Heart right ventricle (tissue), 16 donors: ENCODE measurements at regions of chr6 and their contacts with region 1.

Region 1: DNA sequence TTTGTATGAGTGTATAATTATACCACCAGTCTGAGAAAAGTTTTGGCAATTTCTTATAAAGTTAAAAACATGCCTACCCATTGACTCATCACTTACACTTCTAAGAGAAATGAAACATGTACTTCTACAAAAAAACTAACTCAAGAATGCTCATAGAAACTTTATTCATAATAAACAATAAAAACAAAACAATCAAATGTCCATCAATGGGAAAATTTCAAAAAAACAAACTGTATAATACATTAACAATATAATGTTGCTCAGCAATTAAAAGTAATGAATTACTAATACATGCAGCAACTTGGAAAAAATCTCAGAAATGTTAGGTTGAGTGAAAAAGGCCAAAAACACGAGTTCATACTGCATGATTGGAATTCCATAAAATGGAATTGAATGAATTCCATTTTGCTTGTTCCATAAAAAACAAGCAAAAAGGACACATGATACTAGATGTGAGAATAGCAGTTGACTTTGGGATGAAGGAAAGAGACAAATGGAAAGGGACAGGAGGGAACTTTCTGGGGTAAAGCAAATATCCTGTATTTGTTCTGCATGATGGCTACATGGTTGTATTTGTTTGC is 726.6 kb downstream of the RFPL4B start:
- DNase-seq: no peak
- ATAC-seq: no peak
- H3K4me3 ChIP-seq: no peak overlapping the region
- H3K27ac ChIP-seq: no peak overlapping the region
- H3K4me1 ChIP-seq: no peaks in the 10 kb centered on the region
- H3K27me3 ChIP-seq: no peaks in the 10 kb centered on the region
- CTCF ChIP-seq: no peak

Region 2: GRCh38 chr6:112665114-112665513 is 408.6 kb before region 1 on chr6:
- intact Hi-C with region 1: no loop called
- DNase-seq: no peak
- ATAC-seq: no peak
- H3K4me3 ChIP-seq: no peak overlapping the region
- H3K27ac ChIP-seq: no peak overlapping the region
- H3K4me1 ChIP-seq: no peaks in the 10 kb centered on the region
- H3K27me3 ChIP-seq: no peaks in the 10 kb centered on the region
- CTCF ChIP-seq: no peak

Region 3: GRCh38 chr6:113375950-113376846 is 302.5 kb after region 1 on chr6:
- intact Hi-C with region 1: loop called in 1 of 10 experiments (anchors 5 kb)
- DNase-seq: no peak
- ATAC-seq: no peak
- H3K4me3 ChIP-seq: no peak overlapping the region
- H3K27ac ChIP-seq: no peak overlapping the region
- H3K4me1 ChIP-seq: no peaks in the 10 kb centered on the region
- H3K27me3 ChIP-seq: no peaks in the 10 kb centered on the region
- CTCF ChIP-seq: no peak